ENCODE measurements at regions of chr12 and their contacts with region 1.

Region 1: GRCh38 chr12:18895540-18896325 is 157.8 kb downstream of the CAPZA3 start:
- ATAC-seq: peak in 5 of 8 experiments; percentile 39 to 97 (median 75)
- H3K4me3 ChIP-seq: no peak overlapping the region
- H3K27ac ChIP-seq: no peak overlapping the region
- H3K4me1 ChIP-seq: peaks cover 2 to 9% of the 10 kb centered on the region in 2 donors

Region 2: DNA sequence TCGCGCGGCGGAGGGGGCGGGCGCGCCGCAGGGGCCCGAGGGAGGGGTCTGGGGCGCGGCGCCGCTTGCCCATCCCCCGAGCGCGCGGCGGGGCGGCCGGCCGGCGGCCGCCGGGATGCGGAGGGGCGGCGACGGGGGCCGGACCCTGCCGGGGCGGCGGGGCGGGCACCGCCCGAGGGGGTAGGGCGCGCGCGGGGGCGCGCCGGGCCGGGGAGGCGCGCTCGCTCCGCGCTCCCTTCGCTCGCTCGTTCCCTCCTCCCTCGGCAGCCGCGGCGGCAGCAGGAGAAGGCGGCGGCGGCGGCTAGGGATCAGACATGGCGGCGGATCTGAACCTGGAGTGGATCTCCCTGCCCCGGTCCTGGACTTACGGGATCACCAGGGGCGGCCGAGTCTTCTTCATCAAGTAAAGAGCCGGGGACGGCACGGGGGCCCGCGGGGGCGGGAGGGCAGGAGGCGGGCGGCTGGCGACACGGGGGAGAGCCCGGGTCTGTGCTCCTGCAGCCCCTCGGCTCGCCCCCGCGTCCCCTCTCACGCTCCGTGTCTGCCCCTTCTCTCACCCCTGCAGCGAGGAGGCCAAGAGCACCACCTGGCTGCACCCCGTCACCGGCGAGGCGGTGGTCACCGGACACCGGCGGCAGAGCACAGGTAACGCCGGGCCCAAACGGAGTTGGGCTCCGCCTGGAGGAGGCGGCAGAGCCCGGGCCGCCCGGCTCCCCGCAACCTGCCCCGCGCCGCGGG is 233.9 kb after region 1 on chr12 and contains the start of gene PLEKHA5:
- in situ Hi-C with region 1: loop called in 1 of 9 experiments (anchors 25 kb)
- ATAC-seq: peak; percentile 71 to 82 (median 75)
- H3K4me3 ChIP-seq: peak within 1 kb of the TSS; percentile 52 to 84 (median 79)
- H3K27ac ChIP-seq: peak within 1 kb of the TSS; percentile 77 to 89
- H3K4me1 ChIP-seq: peaks cover 0 to 23% of the 10 kb centered on the region in 2 donors
- total RNA-seq, gene PLEKHA5: 17.6 to 72.2 (median 27.1) TPM